Heart left ventricle (tissue), 16 donors: ENCODE measurements at regions of chr14 and their contacts with region 1.

Region 1: GRCh38 chr14:33792720-33793368 is 158.0 kb downstream of the EGLN3 start:
- DNase-seq: peak; percentile 73 to 87 (median 79)
- ATAC-seq: peak; percentile 72 to 94 (median 87)
- H3K4me3 ChIP-seq: peak overlapping the region in 9 of 12 donors; percentile 15 to 49 (median 30)
- H3K27ac ChIP-seq: peak overlapping the region in 1 of 12 donors; percentile 32
- H3K4me1 ChIP-seq: peaks cover 0 to 13% (median 2%) of the 10 kb centered on the region in 12 donors
- H3K27me3 ChIP-seq: no peaks in the 10 kb centered on the region
- CTCF ChIP-seq: peak; percentile 91 to 98 (median 96)
- POLR2A ChIP-seq: no peak

Region 2: DNA sequence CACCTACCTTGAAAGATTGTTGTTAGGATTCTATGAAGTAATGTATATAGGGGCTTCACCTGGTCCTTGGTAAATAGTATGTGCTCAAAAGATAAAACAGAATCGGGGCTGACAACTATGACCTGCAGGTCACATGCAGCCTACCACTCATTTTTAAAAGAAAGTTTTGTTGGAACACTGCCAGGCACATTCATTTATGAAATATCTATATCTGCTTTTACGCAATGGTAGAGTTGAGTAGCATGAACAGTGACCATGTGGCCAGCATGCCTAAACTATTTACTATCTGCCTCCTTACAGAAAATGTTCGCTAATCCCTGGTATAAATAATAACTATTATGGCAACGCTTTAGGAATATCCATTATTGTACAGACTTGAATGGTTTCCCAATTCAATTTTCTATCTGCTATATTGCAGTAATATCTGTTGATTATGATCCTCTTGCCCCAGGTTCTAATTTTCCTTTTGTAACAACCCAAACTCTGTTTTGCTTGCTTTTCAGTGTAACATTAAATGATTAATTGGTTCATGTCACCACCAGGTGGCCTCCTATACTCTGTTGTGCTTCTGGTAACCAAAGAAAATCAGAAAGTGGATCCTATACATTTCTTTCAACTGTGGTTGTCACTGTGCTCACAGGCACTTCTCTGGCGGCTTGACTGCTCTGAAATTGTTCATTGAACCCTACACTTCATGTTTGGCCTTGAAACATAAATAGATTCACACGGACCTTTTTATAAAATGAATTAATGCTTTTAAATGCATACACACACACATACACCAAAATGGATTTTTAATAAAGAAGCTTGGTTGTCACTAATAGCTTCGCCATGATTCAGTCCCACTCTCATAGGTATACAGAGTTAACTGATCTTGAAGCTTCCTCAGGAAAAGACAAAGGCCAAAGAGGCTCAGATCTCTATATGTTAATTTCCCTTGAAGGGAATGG is 1081.8 kb before region 1 on chr14:
- intact Hi-C with region 1: loop called in 6 of 10 experiments (anchors 5 to 10 kb)
- DNase-seq: peak in 1 of 5 donors; percentile 17
- ATAC-seq: peak in 1 of 4 donors; percentile 38
- H3K4me3 ChIP-seq: peak overlapping the region in 4 of 12 donors; percentile 7 to 24 (median 18)
- H3K27ac ChIP-seq: peak overlapping the region in 4 of 12 donors; percentile 12 to 79 (median 66)
- H3K4me1 ChIP-seq: peaks cover 5 to 45% (median 34%) of the 10 kb centered on the region in 12 donors
- H3K27me3 ChIP-seq: no peaks in the 10 kb centered on the region
- CTCF ChIP-seq: peak; percentile 31 to 70 (median 55)
- POLR2A ChIP-seq: no peak

Region 3: GRCh38 chr14:32826404-32827082 is 966.3 kb before region 1 on chr14:
- intact Hi-C with region 1: loop called in 1 of 10 experiments (anchors 10 kb)
- DNase-seq: peak in 3 of 5 donors; percentile 27 to 38 (median 30)
- ATAC-seq: peak; percentile 38 to 74 (median 65)
- H3K4me3 ChIP-seq: peak overlapping the region in 1 of 12 donors; percentile 13
- H3K27ac ChIP-seq: peak overlapping the region in 8 of 12 donors; percentile 13 to 65 (median 26)
- H3K4me1 ChIP-seq: peaks cover 0 to 58% (median 20%) of the 10 kb centered on the region in 12 donors
- H3K27me3 ChIP-seq: no peaks in the 10 kb centered on the region
- CTCF ChIP-seq: peak in 6 of 12 donors; percentile 12 to 43 (median 24)
- POLR2A ChIP-seq: no peak

Region 4: DNA sequence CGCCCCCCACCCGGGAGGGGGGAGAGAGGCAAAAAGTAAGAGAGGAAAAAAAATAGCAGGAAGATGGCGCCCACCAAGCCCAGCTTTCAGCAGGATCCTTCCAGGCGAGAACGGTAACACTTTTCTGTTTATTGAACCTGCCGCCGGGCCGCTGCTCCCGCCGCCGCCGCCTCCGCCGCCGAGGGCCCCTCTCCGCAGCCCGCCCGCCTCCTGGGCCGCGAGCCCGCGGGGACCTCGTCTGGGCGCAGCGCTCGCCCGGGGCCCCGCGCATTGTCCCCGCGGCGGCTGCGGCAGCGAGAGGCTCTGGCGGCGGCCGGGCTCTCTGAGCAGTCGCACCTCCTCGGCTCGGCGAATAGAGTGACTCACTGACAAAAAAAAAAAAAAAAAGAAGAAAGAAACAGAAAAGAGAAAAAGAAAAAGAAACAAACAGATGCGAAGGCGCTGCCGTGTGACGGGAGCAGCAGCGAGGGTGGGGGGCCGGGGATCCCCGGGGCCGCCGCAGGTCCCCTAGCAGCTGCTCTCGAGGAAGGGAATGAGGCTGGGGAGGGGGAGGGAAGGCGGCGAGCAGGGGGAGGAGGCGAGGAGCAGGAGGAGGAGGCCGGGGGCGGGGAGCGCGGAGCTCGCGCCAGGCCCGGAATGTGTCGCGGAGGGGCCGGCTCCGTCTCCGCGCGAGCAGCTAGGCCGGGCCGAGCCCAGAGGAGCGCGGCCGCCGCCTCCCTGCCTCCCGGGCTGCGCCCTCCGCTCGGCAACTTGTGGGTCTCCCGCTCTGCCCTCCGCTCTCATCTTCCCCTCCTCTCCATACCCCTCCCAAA is 853.4 kb before region 1 on chr14:
- intact Hi-C with region 1: loop called in 2 of 10 experiments (anchors 10 kb)
- DNase-seq: peak; percentile 82 to 87 (median 84)
- ATAC-seq: peak; percentile 73 to 96 (median 92)
- H3K4me3 ChIP-seq: peak overlapping the region; percentile 25 to 69 (median 60)
- H3K27ac ChIP-seq: peak overlapping the region; percentile 55 to 88 (median 74)
- H3K4me1 ChIP-seq: peaks cover 0 to 23% (median 8%) of the 10 kb centered on the region in 12 donors
- H3K27me3 ChIP-seq: peaks cover 8 to 47% (median 30%) of the 10 kb centered on the region in 9 donors
- CTCF ChIP-seq: no peak
- POLR2A ChIP-seq: no peak

Region 5: GRCh38 chr14:33432407-33433023 is 360.3 kb before region 1 on chr14:
- intact Hi-C with region 1: loop called in 1 of 10 experiments (anchors 5 kb)
- DNase-seq: no peak
- ATAC-seq: no peak
- H3K4me3 ChIP-seq: no peak overlapping the region
- H3K27ac ChIP-seq: no peak overlapping the region
- H3K4me1 ChIP-seq: peaks cover 0 to 12% (median 0%) of the 10 kb centered on the region in 12 donors
- H3K27me3 ChIP-seq: no peaks in the 10 kb centered on the region
- CTCF ChIP-seq: peak in 11 of 12 donors; percentile 19 to 56 (median 39)
- POLR2A ChIP-seq: no peak

Region 6: GRCh38 chr14:34136996-34137745 is 344.3 kb after region 1 on chr14:
- intact Hi-C with region 1: no loop called
- DNase-seq: no peak
- ATAC-seq: no peak
- H3K4me3 ChIP-seq: no peak overlapping the region
- H3K27ac ChIP-seq: no peak overlapping the region
- H3K4me1 ChIP-seq: peaks cover 0 to 12% (median 1%) of the 10 kb centered on the region in 12 donors
- H3K27me3 ChIP-seq: no peaks in the 10 kb centered on the region
- CTCF ChIP-seq: no peak
- POLR2A ChIP-seq: no peak